IMR-90 (cell line): ENCODE measurements at regions of chr18 and their contacts with region 1.

Region 1: GRCh38 chr18:46212398-46212797 is 108.2 kb downstream of the HAUS1 start:
- DNase-seq: no peak
- ATAC-seq: no peak
- H3K4me3 ChIP-seq: no peak overlapping the region
- H3K27ac ChIP-seq: no peak overlapping the region
- H3K4me1 ChIP-seq: no peaks in the 10 kb centered on the region
- H3K27me3 ChIP-seq: no peaks in the 10 kb centered on the region
- CTCF ChIP-seq: no peak
- POLR2A ChIP-seq: no peak
- RAD21 ChIP-seq: no peak

Region 2: DNA sequence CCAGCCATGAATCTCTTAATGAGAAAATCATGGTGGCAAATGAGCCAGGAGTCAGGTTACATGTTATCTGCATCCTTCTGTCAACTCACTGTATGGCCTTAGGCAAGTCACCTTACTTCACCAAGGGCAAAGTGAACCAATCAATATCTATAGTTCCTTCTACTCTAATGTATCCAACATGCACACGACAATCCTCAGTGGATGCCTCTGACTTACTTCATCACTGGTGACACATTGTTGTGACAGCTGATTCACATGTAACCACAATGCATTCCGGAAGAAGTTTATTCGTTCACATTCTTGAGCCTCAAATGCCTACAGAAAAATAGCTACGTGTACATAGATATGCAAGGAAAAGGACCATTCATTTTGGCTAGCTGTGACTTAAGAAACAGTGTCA is 219.0 kb before region 1 on chr18:
- CTCF ChIA-PET with region 1: no interaction called
- POLR2A ChIA-PET with region 1: no interaction called
- dilution Hi-C with region 1: no loop called
- in situ Hi-C with region 1: no loop called
- intact Hi-C with region 1: no loop called
- DNase-seq: peak; percentile 91
- ATAC-seq: peak; percentile 83
- H3K4me3 ChIP-seq: no peak overlapping the region
- H3K27ac ChIP-seq: no peak overlapping the region; the same call in 1 of the 2 replicates
- H3K4me1 ChIP-seq: peaks cover 4% of the 10 kb centered on the region
- H3K27me3 ChIP-seq: no peaks in the 10 kb centered on the region
- CTCF ChIP-seq: no peak
- POLR2A ChIP-seq: no peak
- RAD21 ChIP-seq: no peak

Region 3: DNA sequence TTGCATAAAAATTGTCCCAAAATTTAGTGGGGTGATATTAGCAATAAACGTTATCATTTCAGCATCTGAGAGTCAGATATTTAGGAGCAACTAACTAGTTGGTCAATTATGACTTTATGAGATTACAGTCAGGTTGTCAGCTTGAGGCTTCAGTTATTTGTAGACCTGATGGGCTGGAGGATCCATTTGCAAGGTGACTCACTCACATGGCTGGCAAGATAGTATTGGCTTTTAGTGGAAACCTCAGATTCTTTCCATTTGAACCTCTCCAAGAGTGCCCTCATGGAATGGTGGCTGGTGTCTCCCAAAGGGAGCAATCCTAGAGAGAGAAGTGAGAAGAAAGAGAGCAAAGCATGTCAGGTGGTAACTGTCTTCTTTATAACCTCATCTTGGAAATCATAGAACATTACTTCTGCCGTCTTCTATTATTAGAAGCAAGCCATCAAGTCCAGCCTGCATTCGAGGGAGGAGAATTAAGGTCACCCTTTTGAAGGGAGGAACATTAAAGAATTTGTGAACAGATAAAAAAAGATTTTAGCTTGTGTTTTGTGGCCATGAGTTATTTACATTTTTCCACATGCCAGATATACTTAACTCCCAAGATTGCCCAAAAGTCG is 15.7 kb before region 1 on chr18:
- CTCF ChIA-PET with region 1: interaction called, 4 read pairs
- POLR2A ChIA-PET with region 1: interaction called, 11 read pairs
- dilution Hi-C with region 1: no loop called
- in situ Hi-C with region 1: no loop called
- intact Hi-C with region 1: no loop called
- DNase-seq: peak; percentile 36
- ATAC-seq: no peak; the same call in 1 of the 2 replicates
- H3K4me3 ChIP-seq: no peak overlapping the region
- H3K27ac ChIP-seq: no peak overlapping the region
- H3K4me1 ChIP-seq: peaks cover 13% of the 10 kb centered on the region
- H3K27me3 ChIP-seq: no peaks in the 10 kb centered on the region
- CTCF ChIP-seq: no peak
- POLR2A ChIP-seq: no peak
- RAD21 ChIP-seq: no peak